Right ventricle myocardium inferior (tissue), 1 donor: ENCODE measurements at regions of chr9 and their contacts with region 1.

Region 1: DNA sequence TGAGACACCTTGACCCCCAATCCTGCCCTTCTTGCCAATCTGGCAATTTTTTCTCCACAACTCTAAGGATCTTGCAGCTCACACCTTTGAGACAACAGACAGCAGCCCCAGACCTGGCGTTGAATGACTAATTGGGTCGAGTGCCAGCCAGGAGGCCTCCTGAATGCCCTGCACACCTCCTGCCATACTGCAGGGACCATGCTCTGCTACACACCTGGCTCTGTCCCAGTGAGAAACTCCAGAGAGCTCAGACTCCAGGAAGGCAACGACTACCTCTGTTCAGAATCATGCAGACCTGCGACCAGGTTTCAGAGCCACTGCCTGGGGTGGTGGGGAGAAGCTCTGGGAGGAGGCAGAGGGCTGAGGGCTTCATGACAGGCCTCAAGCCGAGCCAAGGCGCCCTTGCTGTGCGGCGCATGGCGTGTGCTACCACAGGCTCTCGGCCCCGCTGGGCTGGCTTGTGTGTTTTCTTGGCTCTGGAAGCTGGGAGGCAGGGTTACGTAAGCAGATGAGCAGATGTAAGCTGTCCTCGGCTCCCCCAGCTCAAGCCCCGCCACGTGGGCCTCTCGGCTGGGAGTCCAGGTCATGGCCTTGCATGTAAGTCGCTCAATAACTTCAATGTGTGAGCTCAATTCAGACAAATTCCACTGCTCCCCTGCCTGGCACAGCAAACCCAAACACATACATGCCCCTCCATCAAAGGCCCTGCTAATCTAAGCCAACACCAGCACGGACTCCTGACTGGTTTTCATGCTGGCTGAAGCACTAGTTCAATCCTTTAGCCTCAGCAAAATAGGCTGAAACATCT is 27.5 kb downstream of the B4GALT1 start:
- DNase-seq: peak; percentile 91
- ATAC-seq: peak; percentile 86

Region 2: GRCh38 chr9:31799953-31800609 is 1339.5 kb before region 1 on chr9:
- intact Hi-C with region 1: no loop called
- DNase-seq: no peak
- ATAC-seq: no peak

Region 3: GRCh38 chr9:33167046-33167808 is 27.6 kb after region 1 on chr9 and contains the start of gene B4GALT1:
- intact Hi-C with region 1: loop called (anchors 2 kb)
- DNase-seq: peak; percentile 98
- ATAC-seq: peak; percentile 83
- total RNA-seq, gene B4GALT1: 43.6 TPM